Common myeloid progenitor, CD34-positive (primary cell): ENCODE measurements at regions of chr14 and their contacts with region 1.

Region 1: DNA sequence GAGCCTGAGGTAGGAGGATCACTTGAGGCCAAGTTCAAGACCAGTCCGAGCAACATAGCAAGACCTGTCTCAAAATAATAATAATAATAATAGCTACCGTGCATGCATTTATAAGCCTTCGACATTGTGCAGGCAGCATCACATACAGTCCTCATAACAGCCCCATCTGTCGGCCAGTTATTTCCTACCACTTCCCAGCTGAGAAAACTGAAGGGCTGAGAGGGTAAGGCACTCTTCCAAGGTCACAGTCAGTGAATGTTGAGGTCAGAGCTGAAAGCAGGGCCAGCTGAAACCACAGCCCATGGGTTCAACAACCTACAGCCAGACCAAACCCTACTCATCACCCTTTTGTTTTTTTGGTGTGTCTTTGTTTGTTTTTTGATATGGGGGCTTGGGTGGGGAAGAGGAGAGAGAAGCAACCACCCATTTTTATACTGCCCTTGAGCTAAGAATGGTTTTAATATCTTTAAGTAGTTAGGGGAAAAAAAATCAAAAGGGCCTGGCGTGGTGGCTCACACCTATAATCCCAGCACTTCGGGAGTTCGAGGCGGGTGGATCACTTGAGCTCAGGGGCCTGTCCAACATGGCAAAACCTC is 16.8 kb upstream of the ITPK1 start:
- DNase-seq: peak; percentile 45 to 71 (median 70)
- H3K4me3 ChIP-seq: no peak overlapping the region
- H3K27ac ChIP-seq: no peak overlapping the region
- H3K4me1 ChIP-seq: no peaks in the 10 kb centered on the region
- H3K27me3 ChIP-seq: no peaks in the 10 kb centered on the region

Region 2: DNA sequence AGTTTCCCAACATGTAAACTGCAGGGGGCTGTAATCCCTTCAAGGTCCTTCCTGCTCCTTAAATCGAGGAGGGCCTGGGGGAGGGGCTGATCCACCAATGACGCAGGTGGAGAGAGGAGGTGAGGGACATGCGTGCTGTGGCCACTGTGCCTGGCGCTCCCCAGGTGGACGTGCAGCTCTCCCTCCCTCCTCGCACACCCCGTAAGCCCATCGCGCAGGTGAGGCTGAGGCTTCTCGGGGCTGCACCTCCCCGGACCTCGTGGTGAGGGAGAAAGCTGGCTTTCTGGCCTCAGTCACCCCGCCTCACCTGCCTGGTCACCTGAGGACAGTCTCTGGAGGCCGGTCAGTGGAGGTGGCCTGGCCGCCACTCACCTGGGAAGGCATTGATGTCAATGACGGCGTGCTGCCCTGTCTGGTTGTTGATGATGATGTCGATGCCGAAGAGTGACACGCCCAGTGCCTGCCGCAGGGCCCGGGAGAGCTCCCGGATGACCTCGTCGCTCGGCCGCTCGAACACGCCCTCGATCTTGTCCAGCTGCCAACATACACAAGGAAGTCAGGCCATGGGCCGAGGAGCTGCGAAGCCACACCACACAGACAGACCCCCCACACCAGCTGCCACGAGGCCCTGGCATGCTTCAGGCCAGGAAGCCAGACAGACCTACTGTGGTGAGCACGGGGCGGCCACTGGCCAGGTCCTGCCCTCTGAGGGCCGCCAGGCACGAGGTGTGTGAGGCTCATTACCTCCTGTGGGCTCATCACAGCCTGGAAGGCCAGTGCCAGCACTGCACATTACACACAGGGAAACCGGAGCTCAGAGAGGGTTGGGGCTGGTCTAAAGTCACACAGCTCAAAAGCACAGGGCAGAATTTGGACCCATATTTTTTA is 186.4 kb before region 1 on chr14:
- CTCF ChIA-PET with region 1: interaction called, 34 read pairs
- POLR2A ChIA-PET with region 1: no interaction called
- DNase-seq: no peak
- H3K4me3 ChIP-seq: no peak overlapping the region
- H3K27ac ChIP-seq: no peak overlapping the region
- H3K4me1 ChIP-seq: no peaks in the 10 kb centered on the region
- H3K27me3 ChIP-seq: no peaks in the 10 kb centered on the region

Region 3: GRCh38 chr14:92951912-92952471 is 180.6 kb before region 1 on chr14:
- CTCF ChIA-PET with region 1: interaction called, 34 read pairs
- POLR2A ChIA-PET with region 1: no interaction called
- DNase-seq: peak; percentile 65 to 83 (median 75)
- H3K4me3 ChIP-seq: no peak overlapping the region
- H3K27ac ChIP-seq: peak overlapping the region in 1 of 2 experiments; percentile 30
- H3K4me1 ChIP-seq: no peaks in the 10 kb centered on the region
- H3K27me3 ChIP-seq: no peaks in the 10 kb centered on the region

Region 4: DNA sequence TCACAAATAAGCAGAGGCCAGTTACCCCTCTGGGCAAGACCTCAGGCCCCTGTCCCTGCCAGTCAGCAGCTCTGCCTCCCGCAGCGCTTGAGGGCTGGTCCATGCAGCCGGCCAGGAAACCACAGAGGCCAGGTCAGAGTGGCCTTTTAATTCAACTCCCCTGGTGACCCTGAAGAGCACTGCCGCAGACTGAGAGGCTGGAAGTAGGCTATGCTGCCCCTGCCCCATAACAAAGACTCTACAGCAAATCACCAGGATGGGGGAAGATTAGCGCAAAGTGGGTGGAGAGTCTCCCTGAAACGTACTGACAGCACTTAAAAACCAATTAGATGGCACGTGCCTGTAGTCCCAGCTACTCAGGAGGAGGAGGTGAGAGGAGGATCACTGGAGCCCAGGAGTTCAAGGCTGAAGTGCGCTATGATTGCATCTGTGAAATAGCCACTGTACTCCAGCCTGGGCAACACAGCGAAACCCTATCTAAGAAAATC is 87.3 kb before region 1 on chr14:
- CTCF ChIA-PET with region 1: interaction called, 12 read pairs
- POLR2A ChIA-PET with region 1: no interaction called
- DNase-seq: no peak
- H3K4me3 ChIP-seq: no peak overlapping the region
- H3K27ac ChIP-seq: peak overlapping the region in 1 of 2 experiments; percentile 39
- H3K4me1 ChIP-seq: peaks cover 0 to 88% (median 55%) of the 10 kb centered on the region in 4 experiments
- H3K27me3 ChIP-seq: no peaks in the 10 kb centered on the region

Region 5: GRCh38 chr14:93056166-93056839 is 76.3 kb before region 1 on chr14:
- CTCF ChIA-PET with region 1: no interaction called
- POLR2A ChIA-PET with region 1: no interaction called
- DNase-seq: peak; percentile 31 to 63 (median 60)
- H3K4me3 ChIP-seq: no peak overlapping the region
- H3K27ac ChIP-seq: no peak overlapping the region
- H3K4me1 ChIP-seq: peaks cover 4 to 21% (median 14%) of the 10 kb centered on the region in 4 experiments
- H3K27me3 ChIP-seq: no peaks in the 10 kb centered on the region

Region 6: GRCh38 chr14:93105362-93105761 is 27.2 kb before region 1 on chr14:
- CTCF ChIA-PET with region 1: interaction called, 19 read pairs
- POLR2A ChIA-PET with region 1: no interaction called
- DNase-seq: peak; percentile 66 to 80 (median 73)
- H3K4me3 ChIP-seq: no peak overlapping the region
- H3K27ac ChIP-seq: no peak overlapping the region
- H3K4me1 ChIP-seq: peaks cover 5 to 68% (median 30%) of the 10 kb centered on the region in 4 experiments
- H3K27me3 ChIP-seq: no peaks in the 10 kb centered on the region

Region 7: DNA sequence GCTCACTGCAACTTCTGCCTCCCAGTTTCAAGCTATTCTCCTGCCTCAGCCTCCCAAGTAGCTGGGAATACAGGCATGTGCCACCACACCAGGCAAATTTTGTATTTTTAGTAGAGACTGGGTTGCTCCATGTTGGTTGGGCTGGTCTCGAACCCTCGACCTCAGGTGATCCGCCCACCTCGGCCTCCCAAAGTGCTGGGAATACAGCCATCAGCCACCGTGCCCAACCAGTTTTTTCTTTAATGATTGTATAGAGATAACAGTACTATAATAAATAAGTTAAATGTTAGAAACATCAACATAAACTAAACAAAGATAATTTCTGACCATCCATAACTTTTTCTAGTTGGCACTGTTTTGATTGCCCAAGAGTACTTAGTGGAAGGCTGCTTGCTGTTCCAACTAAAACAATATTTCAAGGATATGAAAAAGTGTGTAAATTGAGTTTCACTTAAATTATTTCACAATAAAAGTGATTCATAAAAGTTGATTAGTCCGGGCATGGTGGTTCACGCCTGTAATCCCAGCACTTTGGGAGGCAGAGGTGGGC is 68.7 kb after region 1 on chr14:
- CTCF ChIA-PET with region 1: no interaction called
- POLR2A ChIA-PET with region 1: no interaction called
- DNase-seq: no peak
- H3K4me3 ChIP-seq: no peak overlapping the region
- H3K27ac ChIP-seq: no peak overlapping the region
- H3K4me1 ChIP-seq: peaks cover 2 to 12% (median 11%) of the 10 kb centered on the region in 4 experiments
- H3K27me3 ChIP-seq: no peaks in the 10 kb centered on the region